Gastrocnemius medialis (tissue), 4 donors: ENCODE measurements at regions of chr2 and their contacts with region 1.

Region 1: DNA sequence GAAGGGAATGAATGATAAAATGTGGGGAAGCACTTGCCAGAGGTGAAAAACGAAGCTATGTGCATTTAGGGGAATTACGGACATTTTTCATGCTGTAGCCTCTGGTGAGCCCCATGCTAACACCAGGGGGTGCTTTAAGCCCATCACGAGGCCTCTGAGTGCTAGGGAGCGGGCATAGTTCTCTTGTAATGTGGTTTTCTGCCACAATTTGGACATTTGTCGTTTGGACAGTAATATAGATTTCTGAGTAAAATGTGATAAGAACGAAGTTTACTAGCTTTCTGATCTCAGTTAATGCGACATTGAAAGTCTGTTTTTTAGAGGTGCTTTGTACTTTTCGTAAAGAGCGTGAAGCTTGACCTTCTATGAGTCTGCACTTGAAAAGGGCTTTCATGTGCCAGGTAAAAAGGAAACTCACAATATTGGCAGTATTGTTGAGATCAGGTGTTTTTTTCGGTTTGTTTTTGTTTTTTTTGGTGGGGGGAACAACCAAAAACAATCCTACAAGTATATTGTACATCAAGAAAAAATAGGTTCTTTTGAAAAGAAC is 50.6 kb downstream of the TRAF3IP1 start:
- DNase-seq: no peak
- ATAC-seq: peak; percentile 70 to 74
- H3K4me3 ChIP-seq: no peak overlapping the region
- H3K27ac ChIP-seq: no peak overlapping the region
- H3K4me1 ChIP-seq: peaks cover 0 to 3% of the 10 kb centered on the region in 2 donors
- H3K27me3 ChIP-seq: no peaks in the 10 kb centered on the region
- CTCF ChIP-seq: peak; percentile 60 to 74 (median 68)
- POLR2A ChIP-seq: no peak

Region 2: DNA sequence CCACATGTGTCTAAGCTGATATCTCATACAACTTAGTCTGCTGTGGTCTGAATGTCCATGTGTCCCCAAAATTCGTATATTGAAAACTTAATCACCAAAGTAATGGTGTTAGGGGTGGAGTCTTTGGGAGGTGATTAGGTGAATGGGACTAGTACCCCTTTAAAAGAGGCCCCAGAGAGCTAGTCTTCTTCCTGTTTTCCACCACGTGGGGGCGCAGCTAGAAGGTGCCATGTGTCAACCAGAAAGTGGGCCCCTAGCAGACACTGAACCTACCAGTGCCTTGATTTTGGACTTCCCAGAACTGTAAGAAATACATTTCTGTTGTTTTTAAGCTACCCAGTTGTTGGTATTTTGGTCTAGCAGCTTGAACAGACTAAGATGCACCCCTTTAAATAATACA is 142.4 kb after region 1 on chr2:
- in situ Hi-C with region 1: no loop called
- intact Hi-C with region 1: no loop called
- DNase-seq: no peak
- ATAC-seq: no peak
- H3K4me3 ChIP-seq: no peak overlapping the region
- H3K27ac ChIP-seq: no peak overlapping the region
- H3K4me1 ChIP-seq: no peaks in the 10 kb centered on the region
- H3K27me3 ChIP-seq: peaks cover 0 to under 1% (median 0%) of the 10 kb centered on the region in 3 donors
- CTCF ChIP-seq: peak; percentile 10 to 36 (median 32)
- POLR2A ChIP-seq: no peak

Region 3: DNA sequence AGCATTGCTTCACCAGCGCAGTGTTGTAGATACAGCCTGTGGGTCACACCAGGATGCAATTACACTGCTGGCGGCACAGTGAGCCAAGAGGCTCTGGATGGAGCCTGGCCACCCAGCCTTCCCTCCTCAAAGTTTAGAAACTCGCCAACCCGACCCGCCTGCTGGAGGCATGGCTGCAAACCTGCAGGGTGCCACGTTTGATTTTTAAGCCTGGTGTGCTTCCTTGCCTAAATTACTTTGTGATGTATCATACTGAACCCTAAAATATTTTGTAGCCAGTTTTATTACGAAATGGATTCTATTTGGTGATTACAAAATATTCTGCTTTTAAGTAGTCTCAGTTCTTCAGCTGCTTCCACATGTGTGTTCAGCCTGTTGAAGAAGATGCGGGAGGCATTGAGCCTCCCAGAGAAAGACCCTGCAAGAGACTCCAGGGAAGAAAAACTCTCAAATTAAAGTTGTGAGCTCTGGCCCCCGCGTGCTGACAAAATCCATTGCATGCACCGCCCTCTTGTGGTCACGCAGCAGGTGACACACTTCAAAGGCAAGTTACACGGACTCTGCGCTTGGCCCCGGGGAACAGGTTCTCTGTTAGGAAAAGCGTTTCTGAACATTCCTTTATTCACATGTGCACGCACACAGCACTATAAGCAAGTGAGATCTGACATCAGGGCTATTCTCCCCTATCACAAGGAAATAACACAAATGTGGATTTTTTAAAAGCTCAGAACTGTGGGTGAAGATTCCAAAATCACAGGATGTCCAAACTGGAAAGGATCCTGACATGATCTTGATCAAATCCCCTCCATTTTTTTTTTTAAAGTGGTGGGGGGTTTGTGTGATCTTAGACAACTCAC is 414.0 kb after region 1 on chr2:
- in situ Hi-C with region 1: loop called (anchors 10 to 25 kb)
- intact Hi-C with region 1: loop called (anchors 2 kb)
- DNase-seq: peak; percentile 47 to 65
- ATAC-seq: peak; percentile 71 to 87
- H3K4me3 ChIP-seq: no peak overlapping the region
- H3K27ac ChIP-seq: peak overlapping the region in 2 of 4 donors; percentile 13 to 48
- H3K4me1 ChIP-seq: peaks cover 7 to 10% of the 10 kb centered on the region in 2 donors
- H3K27me3 ChIP-seq: peaks cover 0 to under 1% (median 0%) of the 10 kb centered on the region in 3 donors
- CTCF ChIP-seq: peak; percentile 62 to 86 (median 81)
- POLR2A ChIP-seq: no peak

Region 4: GRCh38 chr2:238970553-238971081 is 599.7 kb after region 1 on chr2:
- in situ Hi-C with region 1: loop called in 1 of 4 experiments (anchors 25 kb)
- intact Hi-C with region 1: no loop called
- DNase-seq: peak in 1 of 2 donors; percentile 37
- ATAC-seq: peak; percentile 41 to 76
- H3K4me3 ChIP-seq: no peak overlapping the region
- H3K27ac ChIP-seq: no peak overlapping the region
- H3K4me1 ChIP-seq: no peaks in the 10 kb centered on the region
- H3K27me3 ChIP-seq: peaks cover 4 to 16% (median 14%) of the 10 kb centered on the region in 3 donors
- CTCF ChIP-seq: peak; percentile 69 to 95 (median 92)
- POLR2A ChIP-seq: no peak